ENCODE measurements at regions of chr17 and their contacts with region 1.

Region 1: GRCh38 chr17:38667099-38667786 is 7.5 kb downstream of the EPOP start:
- DNase-seq: peak; percentile 41
- H3K4me3 ChIP-seq: no peak overlapping the region
- H3K27ac ChIP-seq: no peak overlapping the region
- H3K4me1 ChIP-seq: no peaks in the 10 kb centered on the region
- H3K27me3 ChIP-seq: no peaks in the 10 kb centered on the region
- CTCF ChIP-seq: peak; percentile 73 to 95 (median 89)
- POLR2A ChIP-seq: no peak

Region 2: GRCh38 chr17:38444151-38444550 is 223.1 kb before region 1 on chr17:
- intact Hi-C with region 1: loop called (anchors 10 kb)
- DNase-seq: peak; percentile 69
- H3K4me3 ChIP-seq: no peak overlapping the region
- H3K27ac ChIP-seq: no peak overlapping the region
- H3K4me1 ChIP-seq: no peaks in the 10 kb centered on the region
- H3K27me3 ChIP-seq: no peaks in the 10 kb centered on the region
- CTCF ChIP-seq: peak; percentile 72 to 97 (median 89)
- POLR2A ChIP-seq: no peak

Region 3: DNA sequence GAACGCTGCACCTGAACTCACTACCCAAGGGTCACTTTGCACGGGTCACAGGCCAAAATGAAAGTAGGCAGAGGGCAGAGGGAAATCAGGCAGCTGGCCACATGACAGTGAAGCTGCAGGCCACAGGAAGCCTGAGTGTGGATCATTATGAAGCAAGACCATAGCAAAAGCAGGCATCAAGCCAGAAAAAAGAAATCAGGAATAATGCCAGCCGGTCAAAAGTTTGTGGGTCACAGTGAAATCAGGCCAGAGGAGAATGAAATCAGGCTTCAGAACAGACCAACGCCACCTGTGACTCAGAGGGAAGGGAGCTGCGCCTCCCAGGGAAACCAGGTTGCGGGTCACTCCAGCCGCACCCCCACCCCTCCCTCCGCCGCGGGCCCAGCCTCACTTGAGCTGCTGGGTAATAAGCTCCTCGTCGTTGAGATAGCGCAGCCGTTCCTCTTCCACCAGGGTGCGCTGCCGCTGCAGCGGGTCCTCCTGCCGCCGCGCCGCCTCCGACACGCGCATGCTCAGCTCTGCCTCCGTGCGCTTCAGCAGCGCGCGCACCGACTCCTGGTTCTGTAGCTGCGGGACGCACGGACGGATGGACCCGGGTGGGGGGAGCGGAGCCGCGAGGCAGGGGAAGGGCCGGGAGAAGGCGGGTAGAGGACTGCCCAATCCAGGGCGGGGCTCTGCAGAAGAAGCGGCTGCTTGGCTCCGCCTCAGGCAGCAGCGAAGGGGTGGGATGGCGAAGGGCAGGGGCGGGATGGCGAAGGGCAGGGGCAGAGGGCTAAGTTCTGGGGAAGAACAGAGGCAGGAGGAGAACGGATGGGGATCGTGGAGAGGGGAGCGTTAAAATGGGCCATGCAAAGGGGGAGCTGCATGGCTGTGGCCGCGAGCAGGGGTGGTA is 109.2 kb before region 1 on chr17:
- intact Hi-C with region 1: loop called (anchors 2 kb)
- DNase-seq: peak; percentile 92
- H3K4me3 ChIP-seq: peak overlapping the region; percentile 16 to 28
- H3K27ac ChIP-seq: peak overlapping the region; percentile 46 to 59
- H3K4me1 ChIP-seq: peaks cover 10% of the 10 kb centered on the region
- H3K27me3 ChIP-seq: no peaks in the 10 kb centered on the region
- CTCF ChIP-seq: peak; percentile 53 to 99 (median 94)
- POLR2A ChIP-seq: peak; percentile 86